ENCODE measurements at regions of chr7 and their contacts with region 1.

Region 1: GRCh38 chr7:135601182-135601581 is 43.5 kb downstream of the NUP205 start:
- DNase-seq: no peak
- H3K4me3 ChIP-seq: no peak overlapping the region
- H3K27ac ChIP-seq: no peak overlapping the region
- H3K4me1 ChIP-seq: no peaks in the 10 kb centered on the region
- H3K27me3 ChIP-seq: no peaks in the 10 kb centered on the region
- CTCF ChIP-seq: no peak
- EP300 ChIP-seq: no peak
- POLR2A ChIP-seq: no peak
- RAD21 ChIP-seq: no peak

Region 2: GRCh38 chr7:135584362-135585353 is 16.5 kb before region 1 on chr7:
- CTCF ChIA-PET with region 1: interaction called, 10 read pairs
- POLR2A ChIA-PET with region 1: interaction called, 4 read pairs
- DNase-seq: no peak
- H3K4me3 ChIP-seq: no peak overlapping the region
- H3K27ac ChIP-seq: no peak overlapping the region
- H3K4me1 ChIP-seq: no peaks in the 10 kb centered on the region
- H3K27me3 ChIP-seq: no peaks in the 10 kb centered on the region
- CTCF ChIP-seq: no peak
- EP300 ChIP-seq: no peak
- POLR2A ChIP-seq: no peak
- RAD21 ChIP-seq: no peak

Region 3: GRCh38 chr7:135620980-135621850 is 20.0 kb after region 1 on chr7:
- CTCF ChIA-PET with region 1: interaction called, 16 read pairs
- POLR2A ChIA-PET with region 1: no interaction called
- DNase-seq: peak in 1 of 2 experiments; percentile 1
- H3K4me3 ChIP-seq: no peak overlapping the region
- H3K27ac ChIP-seq: no peak overlapping the region
- H3K4me1 ChIP-seq: no peaks in the 10 kb centered on the region
- H3K27me3 ChIP-seq: no peaks in the 10 kb centered on the region
- CTCF ChIP-seq: peak in 2 of 3 experiments; percentile 39 to 70; a peak in 2 of 4 replicates
- EP300 ChIP-seq: no peak
- POLR2A ChIP-seq: no peak
- RAD21 ChIP-seq: peak; percentile 25 to 31; a peak in 3 of 4 replicates